Endothelial cell of umbilical vein (primary cell): ENCODE measurements at regions of chr6 and their contacts with region 1.

Region 1: DNA sequence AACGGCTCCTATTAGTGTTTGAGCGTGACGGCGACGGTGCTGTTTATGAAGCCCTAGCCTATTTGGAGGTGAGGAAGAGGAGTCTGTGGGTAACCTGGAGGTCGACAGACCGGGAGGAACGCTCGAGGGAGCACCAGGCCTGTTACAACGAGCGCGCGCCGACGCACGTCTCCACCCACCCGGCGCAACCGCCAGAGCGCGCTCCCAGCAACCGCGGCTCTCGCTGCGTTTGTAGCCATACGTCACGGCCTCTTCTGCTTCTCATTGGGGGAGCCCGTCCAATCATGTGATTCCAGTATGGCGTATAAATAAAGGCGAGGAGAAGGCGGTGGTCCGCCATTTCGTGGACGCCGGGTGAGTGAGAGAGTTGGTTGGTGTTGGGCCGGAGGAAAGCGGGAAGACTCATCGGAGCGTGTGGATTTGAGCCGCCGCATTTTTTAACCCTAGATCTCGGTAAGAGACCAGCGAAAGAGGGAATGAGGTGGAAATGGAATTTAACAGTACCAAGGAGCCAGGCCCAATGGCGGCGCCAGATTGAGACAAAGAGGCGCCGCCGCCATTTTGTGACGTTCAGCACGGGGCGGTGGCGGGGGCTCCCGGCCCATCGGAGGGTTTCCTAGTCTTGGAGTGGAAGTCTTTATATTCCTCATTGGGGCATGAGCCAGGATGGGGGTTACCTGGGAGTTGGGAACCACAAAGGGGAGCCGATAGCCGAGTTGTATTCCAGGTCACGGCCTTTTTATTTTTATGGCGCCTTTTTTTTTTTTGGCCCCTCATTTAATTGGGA is at the start of gene SRSF3:
- DNase-seq: peak; percentile 97
- H3K4me3 ChIP-seq: peak within 1 kb of the TSS; percentile 76 to 100 (median 100)
- H3K27ac ChIP-seq: peak within 1 kb of the TSS; percentile 97
- H3K4me1 ChIP-seq: peaks cover 25% of the 10 kb centered on the region
- H3K27me3 ChIP-seq: no peaks in the 10 kb centered on the region
- CTCF ChIP-seq: peak; percentile 23 to 61
- POLR2A ChIP-seq: peak; percentile 100
- total RNA-seq, gene SRSF3: 393 and 422 TPM in 2 replicates

Region 2: GRCh38 chr6:36442671-36443470 is 151.4 kb before region 1 on chr6 and contains the starts of genes KCTD20 and PXT1:
- CTCF ChIA-PET with region 1: no interaction called
- POLR2A ChIA-PET with region 1: no interaction called
- dilution Hi-C with region 1: no loop called
- intact Hi-C with region 1: loop called (anchors 5 kb)
- DNase-seq: peak; percentile 81
- H3K4me3 ChIP-seq: peak within 1 kb of the TSS; percentile 78 to 96 (median 91)
- H3K27ac ChIP-seq: peak within 1 kb of the TSS; percentile 95
- H3K4me1 ChIP-seq: peaks cover 36% of the 10 kb centered on the region
- H3K27me3 ChIP-seq: no peaks in the 10 kb centered on the region
- CTCF ChIP-seq: no peak
- POLR2A ChIP-seq: peak; percentile 95
- total RNA-seq, gene KCTD20: 47.2 and 49.2 TPM in 2 replicates
- total RNA-seq, gene PXT1: not detected in 2 replicates

Region 3: DNA sequence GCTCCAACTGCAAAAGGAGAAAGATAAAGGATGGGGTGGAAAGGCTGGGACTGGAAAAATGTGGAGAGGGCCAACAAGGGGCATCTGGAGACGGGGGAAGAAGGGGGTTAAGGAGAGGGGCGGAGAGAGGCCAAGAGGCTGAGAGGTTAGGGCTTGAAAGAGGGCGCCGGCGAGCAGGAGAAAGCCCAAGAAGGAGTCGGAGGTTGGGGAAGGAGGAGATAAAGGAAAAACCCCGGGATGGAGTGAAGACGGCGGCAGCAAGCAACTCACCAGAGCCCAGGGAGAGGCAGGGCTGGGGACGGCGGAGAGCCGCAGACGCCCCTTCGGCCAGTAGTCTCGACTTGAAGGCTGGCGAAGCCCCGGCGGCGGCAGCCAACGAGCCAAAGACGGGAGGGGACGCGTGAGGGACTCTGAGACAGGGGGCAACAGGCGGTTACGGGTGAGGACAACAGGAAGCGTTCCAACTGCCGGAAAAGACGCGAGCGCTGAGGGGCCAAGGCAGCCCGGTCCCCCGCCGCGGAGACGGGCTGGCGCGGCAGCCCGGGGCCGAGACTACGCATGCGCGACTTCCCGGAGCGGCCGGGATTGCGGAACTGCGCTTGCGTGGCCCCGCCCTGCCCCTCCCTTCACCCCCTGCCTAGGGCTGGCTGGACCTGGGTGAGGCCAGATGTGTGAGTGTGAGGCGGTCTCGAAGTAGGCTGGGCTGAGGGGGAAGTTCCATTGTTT is 47.1 kb before region 1 on chr6 and contains the start of gene STK38:
- CTCF ChIA-PET with region 1: no interaction called
- POLR2A ChIA-PET with region 1: interaction called, 5 read pairs
- dilution Hi-C with region 1: no loop called
- intact Hi-C with region 1: loop called (anchors 1 kb)
- DNase-seq: peak; percentile 92
- H3K4me3 ChIP-seq: peak within 1 kb of the TSS; percentile 64 to 92 (median 72)
- H3K27ac ChIP-seq: peak within 1 kb of the TSS; percentile 88
- H3K4me1 ChIP-seq: peaks cover 22% of the 10 kb centered on the region
- H3K27me3 ChIP-seq: peaks cover 3 to 5% of the 10 kb centered on the region in 2 experiments
- CTCF ChIP-seq: peak in 1 of 2 donors; percentile 2
- POLR2A ChIP-seq: peak; percentile 99
- total RNA-seq, gene STK38: 26.9 and 30.3 TPM in 2 replicates

Region 4: DNA sequence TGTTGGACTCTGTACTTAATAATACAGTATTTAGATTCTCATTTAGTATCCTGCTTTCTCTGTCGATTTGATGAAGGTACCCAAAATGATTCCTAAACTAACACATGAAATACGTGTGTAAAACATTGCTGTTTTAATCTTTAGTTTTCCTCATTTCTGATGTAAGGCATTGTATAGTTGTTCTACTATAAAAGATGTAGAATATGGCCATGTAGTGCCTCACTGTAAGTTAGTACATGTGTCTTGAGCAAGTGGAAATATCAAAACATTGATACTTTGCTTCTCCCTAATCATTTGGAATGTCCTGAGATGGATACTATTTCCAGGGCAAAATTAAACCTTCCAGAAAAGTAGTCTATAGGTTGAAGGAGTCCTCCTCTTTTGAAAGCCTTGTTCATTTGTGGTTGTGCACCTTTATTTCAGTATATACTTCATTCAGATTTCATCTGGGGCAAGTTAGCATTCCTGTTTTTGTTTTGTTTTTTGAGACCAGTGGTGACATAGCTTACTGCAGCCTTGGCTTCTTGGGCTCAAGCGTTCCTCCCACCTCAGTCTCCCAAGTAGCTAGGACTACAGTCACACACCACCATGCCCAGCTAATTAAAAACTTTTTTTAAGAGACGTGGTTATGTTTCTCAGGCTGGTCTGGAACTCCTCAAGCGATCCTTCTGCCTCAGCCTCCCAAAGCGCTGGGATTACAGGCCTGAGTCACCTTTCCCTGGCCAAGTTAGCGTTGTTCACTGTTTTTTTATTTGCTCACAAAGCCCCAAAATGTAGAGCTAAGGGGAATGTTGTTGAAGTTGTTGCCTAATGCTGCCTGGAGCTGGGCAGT is 11.6 kb after region 1 on chr6:
- CTCF ChIA-PET with region 1: interaction called, 8 read pairs
- POLR2A ChIA-PET with region 1: interaction called, 13 read pairs
- dilution Hi-C with region 1: no loop called
- intact Hi-C with region 1: no loop called
- DNase-seq: no peak
- H3K4me3 ChIP-seq: no peak overlapping the region
- H3K27ac ChIP-seq: no peak overlapping the region
- H3K4me1 ChIP-seq: no peaks in the 10 kb centered on the region
- H3K27me3 ChIP-seq: no peaks in the 10 kb centered on the region
- CTCF ChIP-seq: no peak
- POLR2A ChIP-seq: no peak

Region 5: DNA sequence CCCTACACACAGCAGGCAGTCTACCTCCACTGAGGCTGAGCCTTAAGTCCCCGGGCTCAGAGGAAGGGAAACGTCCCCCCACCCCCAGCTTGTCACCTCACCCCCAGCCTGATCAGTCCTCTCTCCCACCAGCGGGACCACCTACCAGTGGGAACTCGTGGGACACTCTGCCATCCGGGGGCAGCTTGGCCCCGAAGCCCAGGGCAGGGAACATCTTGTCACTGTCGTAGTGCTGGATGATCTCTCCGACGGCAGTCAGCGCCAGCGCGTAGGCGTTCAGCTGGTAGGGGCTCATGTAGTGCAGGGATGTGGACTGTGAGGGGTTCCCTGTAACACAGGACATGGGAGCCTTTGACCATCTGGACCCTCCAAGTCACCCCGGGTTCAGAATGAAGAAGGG is 152.0 kb after region 1 on chr6:
- CTCF ChIA-PET with region 1: no interaction called
- POLR2A ChIA-PET with region 1: no interaction called
- dilution Hi-C with region 1: no loop called
- intact Hi-C with region 1: no loop called
- DNase-seq: no peak
- H3K4me3 ChIP-seq: no peak overlapping the region
- H3K27ac ChIP-seq: no peak overlapping the region
- H3K4me1 ChIP-seq: peaks cover 2% of the 10 kb centered on the region
- H3K27me3 ChIP-seq: no peaks in the 10 kb centered on the region
- CTCF ChIP-seq: no peak
- POLR2A ChIP-seq: no peak

Region 6: DNA sequence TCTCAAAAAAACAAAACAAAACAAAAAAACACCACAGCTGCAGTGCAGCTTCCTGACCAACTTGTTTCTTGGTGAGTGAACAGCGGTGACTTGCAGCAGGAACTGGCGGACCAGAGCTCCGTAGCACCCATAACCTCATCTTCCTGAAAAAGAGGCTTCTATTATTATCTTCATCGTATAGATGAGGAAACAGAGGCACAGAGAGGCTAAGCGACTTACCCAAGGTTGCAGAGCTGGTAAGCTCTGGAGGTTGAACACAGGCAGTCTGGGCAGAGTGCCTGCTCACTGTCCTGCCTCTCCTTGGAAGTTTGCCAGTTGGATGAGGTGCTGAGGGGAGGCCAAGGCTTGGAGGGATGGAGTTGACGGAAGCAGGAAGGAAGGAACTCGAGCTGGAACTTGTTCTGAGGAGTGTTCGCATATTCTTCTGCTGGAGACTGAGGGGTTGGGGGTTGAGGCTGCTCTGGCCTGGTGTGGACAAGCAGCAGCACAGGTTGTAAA is 953.4 kb after region 1 on chr6:
- CTCF ChIA-PET with region 1: no interaction called
- POLR2A ChIA-PET with region 1: no interaction called
- dilution Hi-C with region 1: no loop called
- intact Hi-C with region 1: no loop called
- DNase-seq: peak; percentile 80
- H3K4me3 ChIP-seq: no peak overlapping the region
- H3K27ac ChIP-seq: no peak overlapping the region
- H3K4me1 ChIP-seq: peaks cover 21% of the 10 kb centered on the region
- H3K27me3 ChIP-seq: no peaks in the 10 kb centered on the region
- CTCF ChIP-seq: no peak
- POLR2A ChIP-seq: no peak